ENCODE measurements at regions of chr17 and their contacts with region 1.

Region 1: DNA sequence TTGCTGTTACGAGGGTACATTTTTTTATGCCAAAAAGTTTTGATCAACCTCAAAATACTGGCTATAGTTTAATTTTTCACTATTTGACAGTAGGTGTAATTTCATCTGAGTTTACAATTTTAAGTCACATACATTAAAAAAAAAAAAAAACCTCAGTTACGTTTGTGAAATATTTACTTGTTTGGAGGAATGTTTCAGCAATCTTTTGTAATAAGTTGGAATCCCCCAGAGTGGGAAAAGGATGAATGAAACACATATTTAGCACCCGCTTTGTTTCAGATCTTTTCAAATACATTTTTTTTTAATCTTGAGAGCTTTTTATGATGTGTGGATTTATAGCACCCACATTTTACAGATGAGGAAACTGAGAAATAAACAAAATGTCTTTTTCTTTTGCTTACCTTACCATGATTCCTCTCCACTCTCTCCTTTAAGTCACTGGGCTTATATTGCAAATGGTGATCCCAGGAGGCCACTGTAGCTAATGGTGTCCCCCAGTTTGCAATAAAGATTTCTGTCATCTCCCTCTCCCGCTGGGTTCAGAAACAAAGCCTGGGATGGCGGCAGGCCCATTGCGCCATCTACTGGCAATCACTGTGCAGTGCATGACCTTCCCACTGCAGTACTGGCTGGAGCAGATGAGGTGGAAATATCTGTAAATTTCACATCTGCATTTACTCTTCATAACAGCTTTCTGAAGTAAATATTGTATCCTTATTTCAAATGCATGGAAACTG is 27.7 kb downstream of the TBC1D3B start:
- H3K4me3 ChIP-seq: no peak overlapping the region
- H3K27ac ChIP-seq: no peak overlapping the region
- H3K4me1 ChIP-seq: no peaks in the 10 kb centered on the region
- CTCF ChIP-seq: peak; percentile 99

Region 2: DNA sequence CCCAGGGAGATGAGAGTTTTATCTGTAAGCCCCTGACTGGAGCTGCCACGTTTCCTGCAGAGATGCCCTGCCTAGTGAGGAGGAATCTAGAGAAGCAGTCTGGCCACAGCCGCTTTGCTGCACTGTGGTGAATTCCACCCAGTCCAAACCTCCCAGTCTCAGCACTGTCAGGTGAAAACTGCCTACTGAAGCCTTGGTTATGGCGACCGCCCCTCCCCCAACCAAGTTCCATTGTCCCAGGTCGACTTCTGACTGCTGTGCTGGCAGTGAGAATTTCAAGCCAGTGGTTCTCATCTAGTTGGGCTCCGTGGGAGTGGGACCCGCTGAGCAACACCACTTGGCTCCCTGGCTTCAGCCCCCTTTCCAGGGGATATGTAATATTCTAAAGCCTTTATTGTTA is 195.0 kb before region 1 on chr17:
- CTCF ChIA-PET with region 1: interaction called, 39 read pairs
- POLR2A ChIA-PET with region 1: no interaction called
- H3K4me3 ChIP-seq: no peak overlapping the region
- H3K27ac ChIP-seq: no peak overlapping the region
- H3K4me1 ChIP-seq: no peaks in the 10 kb centered on the region
- CTCF ChIP-seq: no peak

Region 3: DNA sequence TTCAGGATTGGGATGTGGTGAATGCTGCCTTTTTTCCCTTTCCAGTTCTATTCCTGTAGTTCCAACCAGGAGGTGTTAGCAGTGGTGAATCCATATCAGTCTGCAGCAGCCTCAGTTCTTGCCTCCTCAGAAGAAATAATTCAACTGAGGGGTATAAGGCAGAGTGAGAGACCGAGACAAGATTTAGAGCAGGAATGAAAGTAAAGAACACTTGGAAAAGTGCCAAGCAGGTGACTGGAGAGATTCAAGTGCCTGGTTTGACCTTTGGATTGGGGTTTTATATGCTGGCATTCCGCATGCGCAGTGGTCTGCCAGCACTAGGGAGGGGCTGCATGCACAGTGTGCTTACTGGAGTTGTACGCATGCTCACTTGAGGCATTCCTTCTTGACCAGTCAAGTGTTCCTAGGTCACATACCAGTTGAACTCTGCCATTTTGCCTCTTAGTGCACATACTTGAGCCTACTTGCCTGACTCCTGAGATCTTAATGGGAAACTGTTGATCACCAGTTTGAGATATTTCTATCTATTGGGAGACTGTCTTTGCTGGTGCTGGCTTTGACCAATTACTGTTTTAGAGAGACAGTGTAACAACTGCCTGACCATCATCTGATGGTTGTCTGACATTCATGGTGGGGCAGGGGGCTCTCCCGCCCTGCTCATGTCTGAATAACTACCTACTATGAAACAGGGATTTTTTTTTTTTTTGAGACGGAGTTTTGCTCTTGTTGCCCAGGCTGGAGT is 146.7 kb before region 1 on chr17:
- CTCF ChIA-PET with region 1: interaction called, 26 read pairs
- POLR2A ChIA-PET with region 1: no interaction called
- H3K4me3 ChIP-seq: no peak overlapping the region
- H3K27ac ChIP-seq: no peak overlapping the region
- H3K4me1 ChIP-seq: 0 out of 2 replicates have a peak, but pooled peaks cover 4% of the 10 kb centered on the region
- CTCF ChIP-seq: no peak

Region 4: GRCh38 chr17:36072431-36073121 is 76.2 kb before region 1 on chr17:
- CTCF ChIA-PET with region 1: interaction called, 80 read pairs
- POLR2A ChIA-PET with region 1: no interaction called
- H3K4me3 ChIP-seq: no peak overlapping the region
- H3K27ac ChIP-seq: no peak overlapping the region
- H3K4me1 ChIP-seq: no peaks in the 10 kb centered on the region
- CTCF ChIP-seq: peak; percentile 53; the same call in 1 of the 2 replicates

Region 5: GRCh38 chr17:36117505-36118382 is 31.0 kb before region 1 on chr17:
- CTCF ChIA-PET with region 1: interaction called, 319 read pairs
- POLR2A ChIA-PET with region 1: no interaction called
- H3K4me3 ChIP-seq: no peak overlapping the region
- H3K27ac ChIP-seq: no peak overlapping the region; the same call in 1 of the 2 replicates
- H3K4me1 ChIP-seq: peaks cover 3% of the 10 kb centered on the region; the same call in 1 of the 2 replicates
- CTCF ChIP-seq: no peak

Region 6: DNA sequence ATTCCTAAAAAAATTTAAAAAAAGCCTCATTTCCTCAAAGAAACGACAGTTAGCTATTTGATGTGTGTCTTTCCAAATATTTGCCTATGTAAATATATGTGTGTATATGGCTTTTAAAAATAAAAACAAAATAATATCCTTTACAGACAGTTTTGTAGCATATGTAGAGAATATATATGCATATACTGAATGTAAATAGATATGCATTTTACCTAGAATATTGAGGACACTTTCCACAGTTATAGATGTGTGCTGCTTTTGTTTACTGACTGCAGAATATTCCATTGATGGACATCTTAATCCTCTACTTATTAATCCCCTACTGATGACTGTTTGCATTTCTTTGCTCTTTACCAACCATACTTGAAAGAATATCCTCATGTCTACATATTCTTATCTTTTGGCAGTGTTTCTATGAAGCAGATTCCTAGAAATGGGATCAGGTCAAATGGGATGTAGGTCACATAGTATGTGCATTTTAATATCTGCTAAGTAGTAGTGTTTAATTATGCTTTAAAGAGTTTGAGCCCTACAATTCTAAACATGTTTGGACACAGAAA is 44.6 kb after region 1 on chr17:
- CTCF ChIA-PET with region 1: no interaction called
- POLR2A ChIA-PET with region 1: no interaction called
- H3K4me3 ChIP-seq: no peak overlapping the region
- H3K27ac ChIP-seq: no peak overlapping the region
- H3K4me1 ChIP-seq: no peaks in the 10 kb centered on the region
- CTCF ChIP-seq: no peak

Region 7: GRCh38 chr17:36486204-36487194 is 337.8 kb after region 1 on chr17 and contains the start of gene ZNHIT3:
- CTCF ChIA-PET with region 1: interaction called, 29 read pairs
- POLR2A ChIA-PET with region 1: no interaction called
- H3K4me3 ChIP-seq: peak within 1 kb of the TSS; percentile 94
- H3K27ac ChIP-seq: peak within 1 kb of the TSS; percentile 64
- H3K4me1 ChIP-seq: no peaks in the 10 kb centered on the region
- CTCF ChIP-seq: no peak

Measured in HEK293 (cell line).